ENCODE measurements at regions of chr17 and their contacts with region 1.

Region 1: DNA sequence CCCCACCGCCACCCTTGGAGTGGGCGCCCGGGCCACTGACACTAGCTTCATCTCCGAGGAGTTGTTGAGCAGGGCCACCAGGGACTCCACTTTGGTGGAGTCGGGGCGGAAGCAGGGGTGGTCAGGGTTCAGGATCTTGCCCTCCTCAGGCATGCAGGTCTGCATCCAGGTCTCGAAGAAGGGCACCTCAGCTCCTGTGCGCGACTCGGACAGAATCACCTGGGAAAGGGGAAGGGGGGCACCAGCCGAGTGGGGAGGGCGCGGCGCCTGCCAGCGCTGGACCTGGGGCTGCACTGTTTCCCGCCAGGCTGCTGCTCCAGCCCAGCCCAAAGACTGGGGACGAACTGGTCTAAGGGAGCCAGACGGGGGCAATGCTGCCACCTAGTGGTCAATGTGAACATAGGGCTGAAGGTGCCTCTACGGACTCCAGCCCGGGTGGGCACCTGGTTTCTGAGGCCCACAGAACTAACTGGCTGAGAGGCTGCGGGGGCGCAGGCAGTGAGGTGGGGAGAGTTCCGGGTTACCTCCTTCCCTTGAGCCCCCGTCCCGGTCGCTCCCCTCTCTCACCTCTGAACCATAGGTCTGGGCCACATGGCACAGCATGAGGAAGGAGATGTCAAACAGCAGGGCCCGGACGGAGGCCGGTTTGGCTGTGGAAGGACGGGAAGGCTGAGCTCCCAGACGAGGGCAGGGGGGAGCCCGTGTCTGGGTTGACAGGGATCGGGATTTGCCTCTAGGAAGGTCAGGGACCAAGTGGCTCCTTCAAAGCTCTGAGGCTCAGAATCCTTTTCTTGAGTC is 11.8 kb downstream of the CSF3 start:
- DNase-seq: no peak
- H3K4me3 ChIP-seq: no peak overlapping the region
- CTCF ChIP-seq: peak; percentile 95

Region 2: GRCh38 chr17:39777534-39778365 is 249.3 kb before region 1 on chr17:
- CTCF ChIA-PET with region 1: no interaction called
- POLR2A ChIA-PET with region 1: no interaction called
- DNase-seq: no peak
- H3K4me3 ChIP-seq: no peak overlapping the region
- CTCF ChIP-seq: no peak

Region 3: GRCh38 chr17:39980351-39981206 is 46.4 kb before region 1 on chr17 and contains the start of gene PSMD3:
- CTCF ChIA-PET with region 1: interaction called, 15 read pairs
- POLR2A ChIA-PET with region 1: no interaction called
- DNase-seq: peak; percentile 97
- H3K4me3 ChIP-seq: peak within 1 kb of the TSS; percentile 96
- CTCF ChIP-seq: peak; percentile 64

Region 4: DNA sequence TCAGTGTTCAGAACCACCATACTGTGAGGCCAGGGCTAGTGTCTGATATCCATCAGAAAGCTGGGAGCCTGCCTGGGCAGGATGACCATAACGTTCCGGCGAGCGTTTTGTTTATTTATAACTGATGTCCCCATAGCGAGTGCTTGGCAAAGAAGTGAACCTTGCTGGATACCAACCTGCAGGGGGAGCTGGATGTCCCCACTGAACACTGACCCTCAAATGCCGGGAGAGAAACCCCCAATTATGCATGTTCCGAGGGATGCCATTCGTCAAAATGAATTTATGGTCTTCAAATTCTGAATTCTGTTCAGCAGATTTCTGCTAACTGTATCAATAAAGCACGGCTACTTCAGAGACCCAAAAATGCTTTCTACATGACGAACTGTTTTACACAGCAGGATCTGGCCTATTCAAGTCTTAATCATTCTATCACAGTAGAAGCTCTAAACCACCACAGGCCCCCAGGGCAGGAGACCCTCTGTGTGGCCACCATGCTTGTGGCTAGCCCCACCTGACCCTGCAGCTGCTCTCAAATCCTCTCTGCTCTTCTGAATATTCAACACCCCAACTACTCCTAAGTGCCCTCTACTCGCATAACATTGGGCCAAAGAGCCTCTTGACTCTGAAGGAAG is 12.0 kb after region 1 on chr17:
- CTCF ChIA-PET with region 1: interaction called, 173 read pairs
- POLR2A ChIA-PET with region 1: no interaction called
- DNase-seq: peak; percentile 42
- H3K4me3 ChIP-seq: no peak overlapping the region
- CTCF ChIP-seq: peak; percentile 79

Region 5: DNA sequence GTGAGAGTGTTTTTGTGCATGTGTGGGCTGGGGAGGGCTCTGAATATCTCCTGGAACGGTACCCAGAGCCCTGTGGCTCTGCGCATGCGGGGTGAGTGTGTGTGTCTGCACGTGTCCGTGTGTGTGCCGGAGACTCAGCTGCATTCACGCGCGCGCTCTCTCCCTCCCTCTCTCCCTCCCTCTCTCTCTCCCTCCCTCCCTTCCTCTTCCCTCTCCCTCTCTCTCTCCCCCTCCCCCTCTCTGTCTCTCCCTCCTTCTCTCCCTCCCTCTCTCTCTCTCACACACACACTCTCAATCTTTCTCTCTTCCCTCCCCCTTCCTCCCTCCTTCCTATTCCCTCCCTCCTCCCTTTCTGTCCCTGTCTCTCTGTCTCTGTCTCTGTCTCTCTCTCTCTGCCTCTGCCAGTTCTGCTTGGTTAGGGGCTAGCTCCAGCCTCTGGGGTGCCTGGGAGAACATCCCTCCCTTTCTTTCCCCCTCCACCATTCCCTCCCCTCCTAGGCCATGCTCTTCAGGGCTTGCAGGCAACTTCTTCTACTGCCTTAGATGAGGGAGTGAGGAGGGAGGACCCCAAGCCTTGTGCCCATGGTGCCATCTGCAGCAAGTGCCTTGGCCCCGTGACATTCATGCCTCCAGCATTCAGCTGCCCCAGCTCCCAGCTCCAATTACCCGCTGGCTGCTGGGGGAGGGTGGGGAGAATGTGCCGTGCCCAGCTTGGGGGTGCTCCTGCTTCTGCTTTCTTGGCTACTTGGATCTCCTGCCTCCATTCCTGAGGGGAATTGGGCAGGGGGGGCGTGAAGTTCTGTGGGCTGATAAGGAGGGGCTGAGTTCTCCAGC is 42.1 kb after region 1 on chr17:
- CTCF ChIA-PET with region 1: interaction called, 21 read pairs
- POLR2A ChIA-PET with region 1: no interaction called
- DNase-seq: peak; percentile 36
- H3K4me3 ChIP-seq: peak overlapping the region; percentile 41
- CTCF ChIP-seq: no peak

Region 6: GRCh38 chr17:40086150-40087044 is 59.4 kb after region 1 on chr17:
- CTCF ChIA-PET with region 1: interaction called, 41 read pairs
- POLR2A ChIA-PET with region 1: no interaction called
- DNase-seq: no peak
- H3K4me3 ChIP-seq: no peak overlapping the region
- CTCF ChIP-seq: peak; percentile 75

Region 7: DNA sequence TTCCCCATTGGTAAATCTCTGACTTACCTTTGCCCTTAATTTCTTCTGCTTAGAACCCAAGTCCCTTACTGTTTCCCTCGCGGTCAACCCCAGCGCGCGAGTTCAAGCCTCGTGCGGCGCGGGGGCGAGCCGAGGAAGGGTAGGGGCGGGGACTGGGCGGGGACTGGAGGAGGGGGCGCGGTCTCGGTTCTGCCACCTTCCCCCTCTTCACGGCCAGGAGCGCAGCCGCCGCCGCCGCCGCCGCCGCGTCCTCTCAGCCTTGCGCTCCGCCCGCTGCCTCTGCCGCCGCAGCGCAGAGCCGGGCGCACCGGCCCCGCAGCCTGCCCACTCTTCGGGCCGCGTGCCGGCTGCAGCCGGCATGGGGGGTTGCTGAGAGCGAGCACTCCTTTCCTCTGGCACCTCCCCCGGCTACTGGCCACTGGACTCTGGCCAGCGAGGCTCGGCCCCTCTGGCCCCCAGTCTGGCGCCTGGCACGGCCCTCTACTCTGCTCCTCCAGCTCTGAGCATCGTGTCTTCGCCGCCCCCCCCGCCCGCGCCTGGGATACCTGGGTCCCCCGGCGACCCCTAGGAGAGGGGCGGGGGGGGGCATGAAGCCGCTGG is 150.4 kb after region 1 on chr17 and contains the start of gene RAPGEFL1:
- CTCF ChIA-PET with region 1: interaction called, 18 read pairs
- POLR2A ChIA-PET with region 1: no interaction called
- DNase-seq: no peak
- H3K4me3 ChIP-seq: peak within 1 kb of the TSS; percentile 55
- CTCF ChIP-seq: no peak

Region 8: GRCh38 chr17:40404003-40404402 is 377.0 kb after region 1 on chr17:
- CTCF ChIA-PET with region 1: no interaction called
- POLR2A ChIA-PET with region 1: no interaction called
- DNase-seq: no peak
- H3K4me3 ChIP-seq: no peak overlapping the region
- CTCF ChIP-seq: no peak

Measured in AG04449 (cell line).